ENCODE measurements at regions of chr14 and their contacts with region 1.

Region 1: DNA sequence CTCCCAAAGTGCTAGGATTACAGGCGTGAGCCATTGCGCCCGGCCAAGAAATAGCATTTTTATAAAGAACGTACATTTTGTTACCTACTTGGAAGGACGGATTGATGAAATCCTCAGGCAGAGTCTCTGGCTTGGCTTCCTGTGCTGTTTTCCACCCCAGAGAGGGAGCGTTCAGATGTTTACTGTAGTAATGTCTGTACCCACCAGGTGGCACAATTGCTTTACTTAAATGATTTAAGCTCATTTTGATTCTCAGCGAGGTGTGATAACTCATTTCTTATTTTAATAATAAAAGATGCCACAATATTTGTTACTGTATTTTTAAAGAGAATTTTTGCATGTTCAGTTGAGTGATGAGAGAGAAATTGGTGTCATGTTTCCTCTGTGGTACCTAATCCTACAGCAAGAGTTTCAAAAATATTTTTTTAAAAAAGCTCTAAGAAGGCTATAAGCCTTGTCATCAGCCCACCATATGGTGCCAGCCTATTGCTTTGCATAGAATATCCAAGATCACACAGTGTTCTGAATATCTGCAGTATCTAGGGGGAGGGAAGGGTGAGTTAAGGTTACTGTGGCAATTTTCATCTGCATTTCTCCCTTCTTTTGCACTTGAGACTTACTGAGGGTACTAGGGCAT is 82.6 kb upstream of the TRAF3 start:
- DNase-seq: peak; percentile 49
- H3K4me3 Mint-ChIP-seq: no peak overlapping the region
- H3K27ac Mint-ChIP-seq: no peak overlapping the region
- H3K4me1 Mint-ChIP-seq: peaks cover 18% of the 10 kb centered on the region
- H3K27me3 Mint-ChIP-seq: no peaks in the 10 kb centered on the region

Region 2: GRCh38 chr14:102524466-102525218 is 170.0 kb before region 1 on chr14:
- CTCF ChIA-PET with region 1: interaction called, 15 read pairs
- POLR2A ChIA-PET with region 1: no interaction called
- intact Hi-C with region 1: no loop called
- DNase-seq: peak; percentile 98
- H3K4me3 Mint-ChIP-seq: peak overlapping the region; percentile 68
- H3K27ac Mint-ChIP-seq: peak overlapping the region; percentile 26
- H3K4me1 Mint-ChIP-seq: peaks cover 28% of the 10 kb centered on the region
- H3K27me3 Mint-ChIP-seq: no peaks in the 10 kb centered on the region

Region 3: DNA sequence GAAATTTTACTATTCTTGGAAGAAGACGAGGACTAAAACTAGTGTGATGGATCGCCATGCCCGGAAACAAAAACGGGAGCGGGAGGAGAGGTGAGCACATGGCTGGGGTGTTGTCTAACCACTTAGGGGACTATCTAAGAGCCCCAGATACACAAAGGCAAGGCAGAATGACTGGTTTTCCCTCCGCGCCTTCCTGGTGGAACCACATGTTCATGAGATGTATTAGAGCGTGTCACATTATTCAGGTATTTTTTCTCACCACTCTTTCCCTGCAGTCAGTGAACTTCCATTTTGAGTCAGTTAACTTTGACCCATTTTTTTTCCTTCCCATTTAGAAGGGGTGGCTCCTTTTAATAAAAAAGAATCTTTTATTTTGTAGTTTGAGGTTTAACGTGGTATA is 13.8 kb after region 1 on chr14:
- CTCF ChIA-PET with region 1: interaction called, 16 read pairs
- POLR2A ChIA-PET with region 1: interaction called, 3 read pairs
- intact Hi-C with region 1: no loop called
- DNase-seq: no peak
- H3K4me3 Mint-ChIP-seq: no peak overlapping the region
- H3K27ac Mint-ChIP-seq: no peak overlapping the region
- H3K4me1 Mint-ChIP-seq: no peaks in the 10 kb centered on the region
- H3K27me3 Mint-ChIP-seq: no peaks in the 10 kb centered on the region

Region 4: DNA sequence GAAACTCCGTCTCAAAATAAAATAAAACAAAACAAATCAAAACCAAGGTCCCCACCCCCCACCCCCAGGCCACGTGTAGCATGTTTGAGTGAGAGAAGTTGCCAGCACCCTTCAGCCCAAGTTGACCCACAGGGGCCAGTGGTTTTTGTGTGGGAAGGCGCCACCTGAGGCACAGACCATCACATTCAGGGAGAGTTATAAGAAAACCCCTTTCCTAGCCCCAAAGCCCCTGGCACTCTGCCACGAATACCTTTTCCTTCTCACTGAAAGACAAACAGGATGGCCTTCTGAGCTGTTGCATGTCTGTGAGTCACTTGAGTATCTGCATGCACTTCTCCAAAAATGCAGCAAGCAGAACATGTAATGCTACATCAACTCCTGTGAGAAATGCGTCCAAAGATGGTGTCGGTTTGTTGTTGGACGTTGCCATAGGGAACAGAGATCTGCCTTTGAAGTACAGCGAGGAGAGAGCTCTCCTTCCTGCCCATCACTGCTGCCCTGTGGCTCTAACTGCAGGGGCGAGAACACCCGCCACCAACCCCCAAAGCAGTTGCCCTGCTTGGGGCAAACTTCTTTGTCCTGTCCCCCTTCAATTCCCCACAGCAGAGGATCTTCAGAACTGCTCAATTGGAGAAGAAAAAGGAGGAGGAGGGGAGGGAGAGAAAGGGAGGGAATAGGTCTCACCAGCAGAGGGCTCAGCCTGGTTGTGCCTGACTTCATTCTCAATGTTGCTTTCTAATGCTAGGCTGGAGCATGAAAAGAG is 79.9 kb after region 1 on chr14:
- CTCF ChIA-PET with region 1: interaction called, 12 read pairs
- POLR2A ChIA-PET with region 1: no interaction called
- intact Hi-C with region 1: loop called (anchors 5 kb)
- DNase-seq: peak; percentile 74
- H3K4me3 Mint-ChIP-seq: peak overlapping the region; percentile 9
- H3K27ac Mint-ChIP-seq: peak overlapping the region; percentile 86
- H3K4me1 Mint-ChIP-seq: peaks cover 35% of the 10 kb centered on the region
- H3K27me3 Mint-ChIP-seq: no peaks in the 10 kb centered on the region

Region 5: GRCh38 chr14:102945346-102946130 is 250.9 kb after region 1 on chr14:
- CTCF ChIA-PET with region 1: interaction called, 13 read pairs
- POLR2A ChIA-PET with region 1: no interaction called
- intact Hi-C with region 1: no loop called
- DNase-seq: no peak
- H3K4me3 Mint-ChIP-seq: no peak overlapping the region
- H3K27ac Mint-ChIP-seq: no peak overlapping the region
- H3K4me1 Mint-ChIP-seq: peaks cover 20% of the 10 kb centered on the region
- H3K27me3 Mint-ChIP-seq: no peaks in the 10 kb centered on the region